Aorta (tissue), 5 donors: ENCODE measurements at regions of chr22 and their contacts with region 1.

Region 1: GRCh38 chr22:28829358-28830181 is 29.2 kb upstream of the XBP1 start:
- DNase-seq: peak; percentile 86 to 88
- ATAC-seq: peak; percentile 93
- H3K4me3 ChIP-seq: no peak overlapping the region
- H3K27ac ChIP-seq: no peak overlapping the region
- H3K4me1 ChIP-seq: no peaks in the 10 kb centered on the region
- H3K27me3 ChIP-seq: no peaks in the 10 kb centered on the region

Region 2: GRCh38 chr22:28019881-28020871 is 809.4 kb before region 1 on chr22:
- intact Hi-C with region 1: loop called (anchors 10 kb)
- DNase-seq: peak; percentile 75 to 91
- ATAC-seq: peak; percentile 79
- H3K4me3 ChIP-seq: no peak overlapping the region
- H3K27ac ChIP-seq: no peak overlapping the region
- H3K4me1 ChIP-seq: no peaks in the 10 kb centered on the region
- H3K27me3 ChIP-seq: no peaks in the 10 kb centered on the region

Region 3: GRCh38 chr22:28044546-28045173 is 784.9 kb before region 1 on chr22:
- intact Hi-C with region 1: loop called in 1 of 2 experiments (anchors 5 kb)
- DNase-seq: no peak
- ATAC-seq: no peak
- H3K4me3 ChIP-seq: no peak overlapping the region
- H3K27ac ChIP-seq: no peak overlapping the region
- H3K4me1 ChIP-seq: no peaks in the 10 kb centered on the region
- H3K27me3 ChIP-seq: no peaks in the 10 kb centered on the region

Region 4: GRCh38 chr22:28051787-28052356 is 777.7 kb before region 1 on chr22:
- intact Hi-C with region 1: loop called (anchors 5 to 10 kb)
- DNase-seq: peak; percentile 71 to 92
- ATAC-seq: no peak
- H3K4me3 ChIP-seq: no peak overlapping the region
- H3K27ac ChIP-seq: no peak overlapping the region
- H3K4me1 ChIP-seq: no peaks in the 10 kb centered on the region
- H3K27me3 ChIP-seq: no peaks in the 10 kb centered on the region

Region 5: GRCh38 chr22:28810821-28811491 is 18.6 kb before region 1 on chr22:
- intact Hi-C with region 1: no loop called
- DNase-seq: no peak
- ATAC-seq: no peak
- H3K4me3 ChIP-seq: no peak overlapping the region
- H3K27ac ChIP-seq: no peak overlapping the region
- H3K4me1 ChIP-seq: no peaks in the 10 kb centered on the region
- H3K27me3 ChIP-seq: no peaks in the 10 kb centered on the region